ENCODE measurements at regions of chr1 and their contacts with region 1.

Region 1: DNA sequence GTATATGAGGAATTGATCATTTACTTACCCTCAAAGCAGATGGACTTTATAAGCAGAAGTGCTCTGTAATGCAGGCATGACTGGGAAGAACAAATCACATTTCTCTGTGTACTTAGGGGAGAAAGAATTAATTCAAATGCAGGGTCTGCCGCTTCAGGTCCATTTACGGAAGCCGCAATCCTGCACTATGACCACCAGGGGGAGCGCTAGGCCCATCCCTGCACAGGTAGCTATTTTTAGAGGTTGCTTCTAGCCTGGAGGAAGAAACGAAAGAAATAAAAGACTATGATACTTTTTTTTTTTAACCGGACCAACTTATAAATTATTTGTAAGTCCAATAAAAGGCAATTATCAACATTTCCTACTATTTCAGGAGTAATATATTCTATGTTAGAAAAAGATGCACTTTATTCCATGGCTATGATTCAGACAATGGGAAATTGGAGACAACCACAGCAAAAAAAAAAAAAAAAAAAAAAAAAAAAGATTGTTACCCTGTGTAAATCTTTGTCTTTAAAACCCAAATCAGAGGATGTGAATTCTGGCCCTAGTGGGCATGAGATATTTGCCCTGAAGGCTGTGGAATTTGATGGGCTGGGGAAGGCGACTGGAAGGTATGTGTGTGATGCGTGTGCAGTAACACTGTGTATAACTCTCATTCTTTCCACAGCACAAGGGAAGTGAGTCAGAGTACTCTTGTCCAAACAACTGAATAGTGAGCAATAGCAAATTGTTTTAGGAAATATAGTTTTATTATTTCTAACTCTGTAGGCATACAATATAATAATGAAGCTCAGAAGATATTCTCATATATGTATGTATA is 12.9 kb upstream of the FYB2 start:
- DNase-seq: peak; percentile 67 to 76 (median 70)
- ATAC-seq: peak; percentile 81
- H3K4me3 ChIP-seq: no peak overlapping the region
- H3K27ac ChIP-seq: no peak overlapping the region
- H3K4me1 ChIP-seq: no peaks in the 10 kb centered on the region
- H3K27me3 ChIP-seq: peaks cover 0 to 3% of the 10 kb centered on the region in 2 donors
- CTCF ChIP-seq: peak; percentile 91 to 100 (median 94)
- POLR2A ChIP-seq: no peak

Region 2: DNA sequence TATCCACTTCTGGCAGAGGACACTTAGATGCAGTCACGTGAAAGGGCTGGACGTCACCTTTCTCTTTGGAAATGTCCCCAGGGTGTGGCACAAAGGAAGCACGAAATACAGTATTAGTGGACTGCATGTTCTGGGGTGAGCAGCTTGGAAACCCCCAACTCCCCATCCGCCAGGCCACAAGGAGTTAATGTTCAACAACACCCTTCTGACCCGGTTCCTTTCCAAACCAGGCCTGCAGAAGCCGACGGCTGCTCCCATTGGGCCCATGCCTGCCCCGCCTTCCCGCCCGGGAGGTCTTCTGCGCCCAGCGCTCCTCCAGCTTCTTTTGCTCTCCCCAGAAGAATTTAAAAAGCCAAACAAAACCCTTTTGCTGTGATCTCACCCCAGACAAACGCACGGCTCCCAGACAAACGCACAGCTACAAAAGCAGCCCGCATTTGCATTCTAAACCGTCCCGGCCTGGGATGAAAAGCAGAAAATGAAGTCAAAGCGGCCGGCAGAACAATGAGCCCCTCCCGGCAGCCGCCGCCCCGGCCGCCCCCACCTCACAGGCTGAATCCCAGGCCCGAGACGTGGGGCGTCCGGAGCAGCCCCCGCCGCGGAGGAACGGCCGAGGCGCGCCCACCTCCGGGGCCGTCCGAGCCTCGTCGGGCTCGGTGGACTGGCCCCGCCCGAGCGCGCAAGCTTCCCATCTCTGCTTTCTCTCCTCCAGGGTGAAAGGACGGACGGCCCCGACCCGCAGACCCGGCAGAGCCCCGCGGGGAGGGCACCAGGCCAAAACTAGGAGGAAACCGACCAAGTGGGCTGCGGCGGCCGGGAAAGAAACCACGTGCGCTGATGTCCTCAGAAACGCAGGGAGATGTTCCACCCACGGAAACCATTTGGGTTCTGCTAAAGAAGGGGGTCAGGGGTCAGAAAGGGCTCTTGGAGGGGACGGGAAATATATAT is 354.6 kb before region 1 on chr1:
- intact Hi-C with region 1: no loop called
- DNase-seq: peak; percentile 60 to 70 (median 68)
- ATAC-seq: peak; percentile 89
- H3K4me3 ChIP-seq: peak overlapping the region; percentile 23 to 49
- H3K27ac ChIP-seq: peak overlapping the region; percentile 49 to 87 (median 84)
- H3K4me1 ChIP-seq: peaks cover 11% of the 10 kb centered on the region
- H3K27me3 ChIP-seq: no peaks in the 10 kb centered on the region
- CTCF ChIP-seq: no peak
- POLR2A ChIP-seq: peak in 2 of 3 donors; percentile 60 to 71

Region 3: GRCh38 chr1:56963667-56964066 is 131.6 kb after region 1 on chr1:
- intact Hi-C with region 1: loop called (anchors 5 kb)
- DNase-seq: no peak
- ATAC-seq: no peak
- H3K4me3 ChIP-seq: no peak overlapping the region
- H3K27ac ChIP-seq: no peak overlapping the region
- H3K4me1 ChIP-seq: peaks cover 13% of the 10 kb centered on the region
- H3K27me3 ChIP-seq: no peaks in the 10 kb centered on the region
- CTCF ChIP-seq: no peak
- POLR2A ChIP-seq: no peak

Region 4: DNA sequence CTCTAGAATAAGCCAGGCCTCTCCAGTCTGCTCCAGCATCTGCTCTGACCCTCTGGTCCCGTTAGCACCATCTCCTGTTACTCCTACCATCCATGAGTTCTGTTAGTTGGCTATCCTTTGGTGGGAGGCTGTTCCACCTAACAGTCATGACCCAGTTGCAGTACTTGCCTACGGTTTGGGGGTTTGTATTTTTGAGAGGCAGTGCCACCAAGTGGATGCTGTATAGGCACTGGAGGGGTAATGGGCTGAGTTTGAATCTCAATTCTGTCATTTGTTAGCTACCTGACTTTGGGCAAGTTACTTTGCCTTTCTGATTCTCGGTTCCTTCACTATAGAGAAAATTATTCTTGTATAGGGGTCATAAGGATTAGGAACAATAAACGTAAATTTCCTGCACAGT is 145.8 kb after region 1 on chr1:
- intact Hi-C with region 1: loop called (anchors 5 kb)
- DNase-seq: no peak
- ATAC-seq: no peak
- H3K4me3 ChIP-seq: no peak overlapping the region
- H3K27ac ChIP-seq: no peak overlapping the region
- H3K4me1 ChIP-seq: peaks cover 9% of the 10 kb centered on the region
- H3K27me3 ChIP-seq: no peaks in the 10 kb centered on the region
- CTCF ChIP-seq: no peak
- POLR2A ChIP-seq: no peak

Measured in body of pancreas (tissue), 4 donors.